PC-9 (cell line): ENCODE measurements at regions of chr3 and their contacts with region 1.

Region 1: GRCh38 chr3:168220556-168220955 is 124.8 kb upstream of the GOLIM4 start:
- DNase-seq: no peak
- H3K4me3 ChIP-seq: no peak overlapping the region
- H3K27ac ChIP-seq: no peak overlapping the region
- H3K4me1 ChIP-seq: no peaks in the 10 kb centered on the region
- H3K27me3 ChIP-seq: no peaks in the 10 kb centered on the region
- CTCF ChIP-seq: no peak

Region 2: DNA sequence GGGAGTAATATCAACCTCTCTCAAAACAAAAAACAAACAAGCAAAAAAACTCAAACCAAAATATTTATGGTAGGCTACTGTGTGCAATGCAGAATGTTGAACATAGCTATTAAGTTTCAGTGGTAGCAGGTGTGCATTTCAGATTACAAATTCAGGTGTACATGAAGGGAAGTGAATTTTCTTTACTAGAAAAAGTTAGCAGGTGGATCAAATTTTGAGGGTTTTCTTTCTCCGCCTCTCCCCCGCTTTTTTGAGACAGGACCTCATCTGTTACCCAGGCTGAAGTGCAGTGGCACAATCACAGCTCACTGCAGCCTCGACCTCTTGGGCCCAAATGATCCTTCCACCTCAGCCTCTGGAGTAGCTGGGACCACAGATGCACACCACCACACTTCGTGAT is 15.1 kb before region 1 on chr3:
- CTCF ChIA-PET with region 1: interaction called, 13 read pairs
- POLR2A ChIA-PET with region 1: no interaction called
- intact Hi-C with region 1: no loop called
- DNase-seq: no peak
- H3K4me3 ChIP-seq: no peak overlapping the region
- H3K27ac ChIP-seq: no peak overlapping the region
- H3K4me1 ChIP-seq: no peaks in the 10 kb centered on the region
- H3K27me3 ChIP-seq: no peaks in the 10 kb centered on the region
- CTCF ChIP-seq: no peak

Region 3: GRCh38 chr3:168425936-168426595 is 205.5 kb after region 1 on chr3:
- CTCF ChIA-PET with region 1: no interaction called
- POLR2A ChIA-PET with region 1: no interaction called
- intact Hi-C with region 1: no loop called
- DNase-seq: peak in 1 of 2 experiments; percentile 61
- H3K4me3 ChIP-seq: no peak overlapping the region
- H3K27ac ChIP-seq: no peak overlapping the region
- H3K4me1 ChIP-seq: peaks cover 12% of the 10 kb centered on the region
- H3K27me3 ChIP-seq: no peaks in the 10 kb centered on the region
- CTCF ChIP-seq: no peak